Mammary epithelial cell (primary cell): ENCODE measurements at regions of chr14 and their contacts with region 1.

Region 1: GRCh38 chr14:89724628-89724960 is 229.9 kb downstream of the EFCAB11 start:
- DNase-seq: no peak
- H3K4me3 ChIP-seq: peak overlapping the region in 2 of 3 experiments; percentile 26 to 29
- H3K27ac ChIP-seq: no peak overlapping the region
- H3K4me1 ChIP-seq: peaks cover 7% of the 10 kb centered on the region
- H3K27me3 ChIP-seq: no peaks in the 10 kb centered on the region
- CTCF ChIP-seq: no peak

Region 2: DNA sequence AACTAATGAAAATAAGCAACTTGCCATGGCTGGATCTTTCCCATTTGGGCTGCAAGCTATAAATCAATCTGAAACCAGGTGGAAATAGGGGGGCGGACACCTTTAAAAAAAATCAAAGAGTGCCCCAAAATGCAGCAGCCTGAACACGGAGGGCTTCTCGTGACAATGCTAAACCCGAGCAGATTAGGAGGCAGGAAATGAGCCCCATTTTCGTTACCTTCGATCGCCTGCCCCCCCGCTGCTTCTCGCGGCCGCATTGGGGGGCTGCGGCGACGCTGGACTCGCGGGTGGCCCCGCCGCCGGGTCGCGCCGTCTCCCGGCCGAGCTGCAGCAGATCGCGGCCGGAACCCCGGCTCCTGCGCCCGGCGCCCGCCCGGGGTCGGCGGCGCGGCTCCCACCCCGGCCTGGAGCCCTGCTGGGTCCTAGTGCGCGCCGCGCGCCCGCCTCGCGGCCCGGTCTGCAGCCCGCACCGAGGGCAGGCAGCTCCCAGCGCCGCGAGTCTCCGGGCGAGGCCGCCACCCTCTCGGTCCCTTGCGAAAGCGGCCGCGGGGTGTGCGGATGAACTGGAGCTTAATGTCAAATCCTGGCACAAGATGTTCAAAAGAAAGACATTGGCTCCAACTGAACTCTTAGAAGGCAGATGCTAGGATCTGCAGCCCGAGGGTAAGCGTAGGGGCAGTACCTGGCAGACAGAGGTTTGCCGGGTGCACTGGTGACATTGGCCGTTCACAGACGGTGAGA is 105.6 kb before region 1 on chr14:
- CTCF ChIA-PET with region 1: interaction called, 16 read pairs
- dilution Hi-C with region 1: no loop called
- in situ Hi-C with region 1: no loop called
- intact Hi-C with region 1: no loop called
- DNase-seq: peak; percentile 41
- H3K4me3 ChIP-seq: peak overlapping the region; percentile 61 to 85 (median 70)
- H3K27ac ChIP-seq: peak overlapping the region; percentile 40
- H3K4me1 ChIP-seq: peaks cover 9% of the 10 kb centered on the region
- H3K27me3 ChIP-seq: no peaks in the 10 kb centered on the region
- CTCF ChIP-seq: no peak

Region 3: GRCh38 chr14:89833120-89833644 is 108.6 kb after region 1 on chr14:
- CTCF ChIA-PET with region 1: no interaction called
- dilution Hi-C with region 1: no loop called
- in situ Hi-C with region 1: no loop called
- intact Hi-C with region 1: no loop called
- DNase-seq: no peak
- H3K4me3 ChIP-seq: no peak overlapping the region
- H3K27ac ChIP-seq: no peak overlapping the region
- H3K4me1 ChIP-seq: no peaks in the 10 kb centered on the region
- H3K27me3 ChIP-seq: no peaks in the 10 kb centered on the region
- CTCF ChIP-seq: no peak